ENCODE measurements at regions of chr5 and their contacts with region 1.

Region 1: GRCh38 chr5:96896806-96897205 is 20.5 kb downstream of the ERAP2 start:
- DNase-seq: no peak
- ATAC-seq: peak; percentile 73
- H3K4me3 ChIP-seq: peak overlapping the region; percentile 36
- H3K4me3 Mint-ChIP-seq: peak overlapping the region; percentile 67 to 88 (median 79)
- H3K27ac ChIP-seq: peak overlapping the region; percentile 69
- H3K27ac Mint-ChIP-seq: peak overlapping the region; percentile 83 to 98 (median 94)
- H3K4me1 ChIP-seq: peaks cover 6 to 17% of the 10 kb centered on the region in 2 donors
- H3K4me1 Mint-ChIP-seq: peaks cover 26 to 71% (median 68%) of the 10 kb centered on the region in 7 donors
- H3K27me3 ChIP-seq: no peaks in the 10 kb centered on the region
- H3K27me3 Mint-ChIP-seq: no peaks in the 10 kb centered on the region

Region 2: DNA sequence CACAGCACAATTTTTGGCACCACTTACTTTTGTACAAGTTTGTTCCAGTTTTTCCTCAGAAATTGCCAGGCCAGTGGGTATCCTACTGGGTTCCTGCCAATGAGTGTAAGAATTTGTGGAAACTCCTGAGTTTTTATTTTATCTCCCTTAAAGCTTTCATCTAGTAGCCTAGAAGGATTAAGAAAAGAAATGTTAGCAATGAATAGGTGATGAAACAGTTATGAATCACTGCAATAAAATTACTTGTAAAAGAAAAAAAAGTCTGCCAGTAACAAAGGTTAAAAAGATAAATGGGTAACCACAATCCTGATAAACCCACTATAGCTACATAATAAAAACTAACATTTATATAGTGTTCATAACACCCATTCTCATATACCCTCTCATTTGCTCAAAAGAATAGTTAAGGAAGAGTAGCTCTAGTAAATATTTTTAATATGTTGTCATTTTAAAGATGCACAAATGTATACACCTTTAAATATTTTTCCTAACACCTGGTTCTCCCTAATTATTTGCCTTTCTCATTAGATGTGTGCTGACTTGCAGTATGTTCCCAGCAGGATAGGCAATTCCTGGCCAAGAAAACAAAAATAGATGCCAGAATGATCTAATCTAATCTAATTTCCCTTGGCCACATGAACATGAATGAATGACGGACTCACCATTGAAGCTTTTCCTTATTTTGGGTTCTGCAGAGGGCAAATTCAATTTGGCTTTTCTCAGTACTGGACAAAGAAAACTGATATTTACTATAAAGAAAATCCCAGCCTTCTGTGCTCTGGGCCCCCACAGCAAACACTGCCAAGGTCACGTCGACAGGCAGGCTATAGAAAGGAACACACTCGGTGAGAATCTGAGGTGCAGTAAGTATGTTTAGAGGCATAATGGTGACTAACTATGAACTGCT is 115.5 kb before region 1 on chr5:
- CTCF ChIA-PET with region 1: no interaction called
- POLR2A ChIA-PET with region 1: no interaction called
- intact Hi-C with region 1: loop called in 1 of 2 experiments (anchors 10 kb)
- DNase-seq: no peak
- ATAC-seq: no peak
- H3K4me3 ChIP-seq: no peak overlapping the region
- H3K4me3 Mint-ChIP-seq: no peak overlapping the region
- H3K27ac ChIP-seq: no peak overlapping the region
- H3K27ac Mint-ChIP-seq: peak overlapping the region in 8 of 9 donors; percentile 27 to 77 (median 64)
- H3K4me1 ChIP-seq: no peaks in the 10 kb centered on the region
- H3K4me1 Mint-ChIP-seq: peaks cover 0 to 15% (median 4%) of the 10 kb centered on the region in 7 donors
- H3K27me3 ChIP-seq: no peaks in the 10 kb centered on the region
- H3K27me3 Mint-ChIP-seq: no peaks in the 10 kb centered on the region

Region 3: DNA sequence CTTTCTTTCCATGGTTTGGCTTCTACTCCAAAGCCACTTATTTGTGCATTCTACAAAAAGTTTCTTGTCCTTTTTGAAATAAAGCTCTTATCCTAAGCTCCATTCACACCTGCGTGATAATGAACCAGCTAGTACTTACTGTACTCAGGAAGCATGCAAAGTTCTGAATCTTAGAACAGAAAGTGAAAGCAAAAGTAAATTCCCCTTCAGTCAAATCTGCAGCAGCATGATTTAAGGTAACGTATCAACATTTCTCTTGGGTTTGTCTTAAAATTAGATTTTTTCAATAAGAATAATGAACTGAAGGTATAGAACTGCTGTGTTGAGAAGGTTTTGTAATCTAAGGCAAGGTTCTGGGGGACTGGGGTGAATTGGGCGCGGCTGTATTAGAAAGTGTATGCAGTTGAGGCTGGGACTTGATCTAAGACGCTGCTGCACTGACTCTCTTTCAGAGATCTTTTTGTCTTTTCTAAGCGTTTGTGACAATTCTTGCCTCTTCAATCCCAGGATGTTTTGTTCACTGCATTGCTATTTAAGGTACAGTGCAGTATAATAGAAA is 20.4 kb before region 1 on chr5 and contains the start of gene ERAP2:
- CTCF ChIA-PET with region 1: interaction called, 6 read pairs
- POLR2A ChIA-PET with region 1: interaction called, 57 read pairs
- intact Hi-C with region 1: loop called (anchors 1 kb)
- DNase-seq: peak in 7 of 9 donors; percentile 53 to 73 (median 64)
- ATAC-seq: peak; percentile 79
- H3K4me3 ChIP-seq: peak within 1 kb of the TSS; percentile 85
- H3K4me3 Mint-ChIP-seq: peak within 1 kb of the TSS; percentile 81 to 99 (median 96)
- H3K27ac ChIP-seq: peak within 1 kb of the TSS; percentile 80
- H3K27ac Mint-ChIP-seq: peak within 1 kb of the TSS; percentile 91 to 99 (median 97)
- H3K4me1 ChIP-seq: peaks cover 26 to 56% of the 10 kb centered on the region in 2 donors
- H3K4me1 Mint-ChIP-seq: peaks cover 44 to 76% (median 73%) of the 10 kb centered on the region in 7 donors
- H3K27me3 ChIP-seq: no peaks in the 10 kb centered on the region
- H3K27me3 Mint-ChIP-seq: no peaks in the 10 kb centered on the region
- total RNA-seq, gene ERAP2: 42.5 to 158 (median 97.2) TPM

Region 4: DNA sequence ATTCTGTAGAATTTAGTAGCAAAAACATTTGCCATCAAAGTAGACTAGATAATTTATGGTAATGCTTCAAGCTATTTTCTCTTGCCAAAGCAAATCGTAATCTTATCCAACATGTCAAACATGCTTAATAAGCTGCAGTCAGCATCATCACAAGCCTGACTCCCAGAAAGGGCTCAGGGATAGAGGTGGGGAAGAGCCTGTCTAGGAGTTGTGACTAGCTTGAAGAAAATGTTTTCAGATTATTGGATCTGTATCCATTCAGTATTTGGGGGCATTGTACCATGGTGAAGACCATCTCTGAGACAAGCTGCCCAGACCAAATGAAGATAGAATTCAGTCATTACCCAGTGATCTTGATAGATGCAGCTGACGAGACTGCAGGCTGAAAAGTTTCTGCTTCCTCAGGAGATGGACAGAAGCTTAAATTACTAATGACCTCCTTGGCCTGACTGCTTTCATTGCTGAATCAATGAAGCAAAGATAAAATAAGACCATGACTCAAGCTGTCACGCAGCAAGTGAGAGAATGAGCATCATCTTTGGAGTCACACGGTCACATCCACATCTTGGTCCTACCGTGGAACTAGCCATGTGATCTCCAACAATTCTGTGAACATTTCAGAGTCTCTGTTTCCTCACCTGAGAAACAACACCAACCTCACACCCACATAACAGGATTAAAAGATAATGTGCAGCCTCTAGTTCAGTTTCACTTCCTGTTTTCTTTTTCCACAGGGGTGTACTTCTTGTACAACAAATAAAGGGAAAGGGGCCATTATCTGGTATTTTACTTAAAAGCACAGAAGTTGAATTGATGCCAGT is 11.1 kb before region 1 on chr5:
- CTCF ChIA-PET with region 1: no interaction called
- POLR2A ChIA-PET with region 1: interaction called, 11 read pairs
- intact Hi-C with region 1: loop called (anchors 1 kb)
- DNase-seq: peak in 7 of 9 donors; percentile 46 to 81 (median 69)
- ATAC-seq: peak; percentile 93
- H3K4me3 ChIP-seq: peak overlapping the region; percentile 38
- H3K4me3 Mint-ChIP-seq: peak overlapping the region; percentile 67 to 87 (median 78)
- H3K27ac ChIP-seq: peak overlapping the region; percentile 63
- H3K27ac Mint-ChIP-seq: peak overlapping the region; percentile 91 to 99 (median 96)
- H3K4me1 ChIP-seq: peaks cover 56 to 58% of the 10 kb centered on the region in 2 donors
- H3K4me1 Mint-ChIP-seq: peaks cover 44 to 76% (median 69%) of the 10 kb centered on the region in 7 donors
- H3K27me3 ChIP-seq: no peaks in the 10 kb centered on the region
- H3K27me3 Mint-ChIP-seq: no peaks in the 10 kb centered on the region

Region 5: DNA sequence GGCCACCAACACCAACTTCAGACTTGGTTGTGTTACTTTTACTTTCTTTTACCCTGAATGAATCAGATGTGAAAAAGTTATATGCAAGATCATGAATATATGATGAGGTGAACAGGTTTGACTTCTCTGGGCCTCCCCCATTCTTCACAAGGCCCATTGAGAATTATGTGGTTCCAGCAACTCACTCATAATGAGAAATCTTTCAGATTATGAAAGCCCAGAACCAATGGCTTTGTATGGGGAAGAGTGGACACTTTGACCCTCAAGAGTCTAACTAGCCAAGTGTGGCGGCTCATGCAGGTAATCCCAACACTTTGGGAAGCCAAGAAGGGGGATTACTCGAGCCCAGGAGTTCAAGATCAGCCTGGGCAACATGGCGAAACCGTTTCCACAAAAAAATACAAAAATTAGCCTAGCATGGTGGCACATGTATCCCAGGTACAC is 23.0 kb after region 1 on chr5:
- CTCF ChIA-PET with region 1: interaction called, 5 read pairs
- POLR2A ChIA-PET with region 1: interaction called, 5 read pairs
- intact Hi-C with region 1: loop called in 1 of 2 experiments (anchors 2 kb)
- DNase-seq: no peak
- ATAC-seq: no peak
- H3K4me3 ChIP-seq: no peak overlapping the region
- H3K4me3 Mint-ChIP-seq: no peak overlapping the region
- H3K27ac ChIP-seq: no peak overlapping the region
- H3K27ac Mint-ChIP-seq: peak overlapping the region in 5 of 9 donors; percentile 54 to 87 (median 77)
- H3K4me1 ChIP-seq: peaks cover 0 to 16% of the 10 kb centered on the region in 2 donors
- H3K4me1 Mint-ChIP-seq: peaks cover 14 to 56% (median 49%) of the 10 kb centered on the region in 7 donors
- H3K27me3 ChIP-seq: no peaks in the 10 kb centered on the region
- H3K27me3 Mint-ChIP-seq: no peaks in the 10 kb centered on the region